Esophagus muscularis mucosa (tissue), 4 donors: ENCODE measurements at regions of chr1 and their contacts with region 1.

Region 1: GRCh38 chr1:110630839-110631663 is 24.9 kb upstream of the KCNA2 start:
- DNase-seq: peak; percentile 94
- H3K4me3 ChIP-seq: no peak overlapping the region
- H3K27ac ChIP-seq: no peak overlapping the region
- H3K4me1 ChIP-seq: peaks cover 15 to 27% (median 18%) of the 10 kb centered on the region in 4 donors
- H3K27me3 ChIP-seq: peaks cover 0 to 13% (median 3%) of the 10 kb centered on the region in 4 donors
- CTCF ChIP-seq: peak; percentile 76 to 86 (median 78)
- EP300 ChIP-seq: no peak
- POLR2A ChIP-seq: no peak

Region 2: GRCh38 chr1:110674337-110675059 is 43.4 kb after region 1 on chr1 and contains the start of gene KCNA3:
- intact Hi-C with region 1: no loop called
- DNase-seq: no peak
- H3K4me3 ChIP-seq: peak within 1 kb of the TSS; percentile 54 to 68 (median 60)
- H3K27ac ChIP-seq: no peak within 1 kb of the TSS
- H3K4me1 ChIP-seq: peaks cover 17 to 23% (median 18%) of the 10 kb centered on the region in 4 donors
- H3K27me3 ChIP-seq: peaks cover 7 to 93% (median 33%) of the 10 kb centered on the region in 4 donors
- CTCF ChIP-seq: no peak
- EP300 ChIP-seq: no peak
- POLR2A ChIP-seq: no peak
- total RNA-seq, gene KCNA3: 0.80 to 3.1 (median 1.6) TPM

Region 3: DNA sequence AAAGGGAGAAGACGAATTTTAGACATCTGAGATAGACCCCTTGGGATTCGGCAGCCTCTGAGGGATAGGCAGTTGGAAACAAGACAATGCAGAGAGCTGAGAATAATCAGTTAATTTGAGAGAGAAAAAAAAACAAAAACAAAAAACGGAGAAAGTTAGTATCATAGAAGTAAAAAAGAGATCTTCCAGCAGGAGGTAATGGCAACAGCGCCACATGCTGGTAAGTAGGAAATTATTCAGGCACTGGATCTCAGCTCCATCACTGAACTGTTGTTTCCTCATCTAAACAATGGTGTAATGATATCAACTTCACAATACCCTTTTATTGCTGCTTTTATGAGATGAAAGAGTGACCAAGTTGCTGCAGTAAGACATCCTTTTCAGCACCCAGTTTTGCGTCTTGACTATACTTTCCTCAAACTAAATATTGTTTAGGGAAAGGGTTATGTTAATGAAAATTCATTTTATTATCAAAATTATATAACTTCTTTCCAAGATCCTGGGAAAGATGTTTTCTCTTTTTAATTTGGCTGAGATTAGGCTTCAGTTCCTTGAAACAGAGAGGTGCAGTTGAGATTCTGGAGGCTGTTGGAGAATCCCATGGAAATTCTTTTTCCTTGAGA is 135.1 kb after region 1 on chr1:
- intact Hi-C with region 1: loop called (anchors 1 kb)
- DNase-seq: no peak
- H3K4me3 ChIP-seq: no peak overlapping the region
- H3K27ac ChIP-seq: no peak overlapping the region
- H3K4me1 ChIP-seq: no peaks in the 10 kb centered on the region
- H3K27me3 ChIP-seq: peaks cover 0 to 32% (median 0%) of the 10 kb centered on the region in 4 donors
- CTCF ChIP-seq: peak; percentile 61 to 75 (median 73)
- EP300 ChIP-seq: no peak
- POLR2A ChIP-seq: no peak

Region 4: GRCh38 chr1:110780600-110781484 is 149.8 kb after region 1 on chr1:
- intact Hi-C with region 1: loop called (anchors 5 kb)
- DNase-seq: peak; percentile 94
- H3K4me3 ChIP-seq: no peak overlapping the region
- H3K27ac ChIP-seq: no peak overlapping the region
- H3K4me1 ChIP-seq: peaks cover 0 to 8% (median 4%) of the 10 kb centered on the region in 4 donors
- H3K27me3 ChIP-seq: peaks cover 0 to 31% (median 2%) of the 10 kb centered on the region in 4 donors
- CTCF ChIP-seq: peak; percentile 70 to 81 (median 73)
- EP300 ChIP-seq: no peak
- POLR2A ChIP-seq: no peak